Psoas muscle (tissue), 8 donors: ENCODE measurements at regions of chr22 and their contacts with region 1.

Region 1: DNA sequence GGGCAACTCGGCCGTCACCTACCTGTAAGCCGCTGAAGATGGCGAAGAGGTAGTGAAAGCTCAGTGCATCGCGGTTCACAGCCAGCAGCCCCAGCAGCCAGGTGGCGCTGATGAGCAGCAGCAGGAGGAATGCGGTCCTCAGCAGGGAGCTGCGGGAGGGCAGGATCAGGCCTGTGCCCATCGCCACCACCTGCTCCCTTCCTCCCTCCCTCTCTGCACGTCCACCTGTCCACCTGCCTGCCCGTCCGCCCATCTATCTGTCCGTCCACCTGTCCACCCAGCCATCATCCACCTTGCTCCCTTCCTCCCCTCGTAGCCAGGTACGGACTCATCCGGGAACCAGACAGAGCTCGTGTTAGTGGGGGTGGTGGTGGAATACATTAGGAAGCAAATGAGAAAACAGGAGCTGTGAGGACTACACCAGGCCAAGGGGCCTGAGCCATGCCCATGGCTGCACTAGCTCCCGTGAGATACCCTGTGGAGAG is 32.2 kb downstream of the TRMU start:
- DNase-seq: peak; percentile 69 to 80
- ATAC-seq: peak; percentile 74 to 91 (median 84)
- H3K4me3 ChIP-seq: no peak overlapping the region
- H3K27ac ChIP-seq: no peak overlapping the region
- H3K4me1 ChIP-seq: no peaks in the 10 kb centered on the region
- H3K27me3 ChIP-seq: peaks cover 0 to 22% (median 0%) of the 10 kb centered on the region in 3 donors
- CTCF ChIP-seq: peak; percentile 91

Region 2: GRCh38 chr22:46542011-46542985 is 174.5 kb after region 1 on chr22:
- intact Hi-C with region 1: loop called (anchors 2 to 5 kb)
- DNase-seq: peak; percentile 72 to 80
- ATAC-seq: peak; percentile 89 to 93 (median 92)
- H3K4me3 ChIP-seq: no peak overlapping the region
- H3K27ac ChIP-seq: no peak overlapping the region
- H3K4me1 ChIP-seq: peaks cover 16% of the 10 kb centered on the region
- H3K27me3 ChIP-seq: peaks cover 0 to 26% (median 12%) of the 10 kb centered on the region in 3 donors
- CTCF ChIP-seq: peak; percentile 88